ENCODE measurements at regions of chr15 and their contacts with region 1.

Region 1: GRCh38 chr15:80609512-80609946 is 85.6 kb upstream of the ABHD17C start:
- DNase-seq: peak; percentile 75
- H3K4me3 Mint-ChIP-seq: no peak overlapping the region
- H3K27ac Mint-ChIP-seq: peak overlapping the region; percentile 68
- H3K4me1 Mint-ChIP-seq: peaks cover 24% of the 10 kb centered on the region
- H3K27me3 Mint-ChIP-seq: no peaks in the 10 kb centered on the region
- CTCF ChIP-seq: no peak

Region 2: GRCh38 chr15:80588801-80589200 is 20.7 kb before region 1 on chr15:
- CTCF ChIA-PET with region 1: interaction called, 5 read pairs
- POLR2A ChIA-PET with region 1: interaction called, 18 read pairs
- intact Hi-C with region 1: no loop called
- DNase-seq: peak; percentile 79
- H3K4me3 Mint-ChIP-seq: peak overlapping the region; percentile 1
- H3K27ac Mint-ChIP-seq: peak overlapping the region; percentile 37
- H3K4me1 Mint-ChIP-seq: peaks cover 37% of the 10 kb centered on the region
- H3K27me3 Mint-ChIP-seq: no peaks in the 10 kb centered on the region
- CTCF ChIP-seq: no peak